Activated CD4-positive, alpha-beta T cell treated with anti-CD3 and anti-CD28 coated beads for 36 hours (primary cell): ENCODE measurements at regions of chr5 and their contacts with region 1.

Region 1: GRCh38 chr5:132490486-132491367 is at the start of gene IRF1:
- DNase-seq: peak; percentile 99
- ATAC-seq: peak; percentile 67
- H3K4me3 Mint-ChIP-seq: peak within 1 kb of the TSS; percentile 96
- H3K27ac Mint-ChIP-seq: peak within 1 kb of the TSS; percentile 97
- H3K4me1 Mint-ChIP-seq: peaks cover 69% of the 10 kb centered on the region
- H3K27me3 Mint-ChIP-seq: no peaks in the 10 kb centered on the region
- total RNA-seq, gene IRF1: 121 to 130 TPM

Region 2: DNA sequence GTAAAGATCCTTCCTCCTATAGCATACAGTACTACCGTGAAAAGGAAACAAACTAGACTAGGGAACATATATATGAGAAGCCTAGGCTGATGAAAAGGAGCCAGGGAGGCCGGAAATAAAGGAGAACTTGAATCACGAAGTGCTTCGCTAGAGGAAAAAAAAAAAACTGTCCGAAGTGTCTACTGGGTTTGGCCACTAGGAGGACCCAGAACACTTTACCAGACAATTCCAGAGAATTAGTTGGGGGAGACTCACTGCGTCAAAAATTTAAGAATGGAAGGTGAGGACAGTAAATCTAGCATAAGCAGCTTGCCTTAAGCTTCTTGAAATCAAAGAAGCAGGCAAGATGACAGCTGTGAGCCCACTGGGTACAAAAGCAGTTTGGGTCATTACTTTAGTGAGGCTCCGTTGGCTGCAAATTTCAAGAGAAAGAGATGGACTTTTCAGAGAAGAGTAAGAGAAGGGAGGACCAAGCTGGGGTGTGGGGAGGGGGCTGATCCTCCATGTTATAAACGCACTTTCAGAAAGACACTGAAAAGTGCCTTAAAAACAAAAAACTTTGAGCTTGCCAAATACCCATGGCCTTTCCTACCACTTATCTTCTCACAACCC is 310.5 kb before region 1 on chr5:
- CTCF ChIA-PET with region 1: no interaction called
- POLR2A ChIA-PET with region 1: no interaction called
- intact Hi-C with region 1: no loop called
- DNase-seq: peak; percentile 19
- ATAC-seq: peak; percentile 38
- H3K4me3 Mint-ChIP-seq: no peak overlapping the region
- H3K27ac Mint-ChIP-seq: peak overlapping the region; percentile 73
- H3K4me1 Mint-ChIP-seq: peaks cover 36% of the 10 kb centered on the region
- H3K27me3 Mint-ChIP-seq: no peaks in the 10 kb centered on the region

Region 3: DNA sequence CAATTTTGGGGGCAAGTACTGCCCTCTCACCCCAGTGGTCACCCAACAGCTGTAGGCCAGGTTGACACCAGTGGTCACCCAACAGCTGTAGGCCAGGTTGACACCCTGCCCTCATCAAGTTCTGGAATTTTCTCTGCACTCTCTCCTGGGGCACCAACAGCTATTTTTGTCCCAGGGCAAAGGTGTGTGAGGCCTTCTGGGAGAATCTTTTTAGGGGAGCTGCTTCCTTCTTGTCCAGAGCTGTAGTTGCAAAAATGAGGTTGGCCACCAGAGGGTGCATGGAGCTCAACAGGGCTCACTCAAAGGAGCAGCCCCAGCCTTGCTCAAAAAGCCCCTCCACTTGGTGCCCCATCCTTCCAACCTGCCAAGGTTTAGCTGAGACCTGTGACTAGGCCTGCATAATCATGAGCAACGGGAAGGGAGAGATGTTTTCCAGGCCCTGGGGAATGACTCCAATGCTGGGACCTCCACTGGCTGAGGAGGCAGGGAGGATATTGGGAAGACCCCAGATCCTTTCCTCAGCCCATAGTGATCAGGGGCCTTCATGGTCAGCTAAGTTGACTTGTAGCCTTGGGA is 252.5 kb before region 1 on chr5:
- CTCF ChIA-PET with region 1: no interaction called
- POLR2A ChIA-PET with region 1: no interaction called
- intact Hi-C with region 1: no loop called
- DNase-seq: peak; percentile 89
- ATAC-seq: peak; percentile 95
- H3K4me3 Mint-ChIP-seq: no peak overlapping the region
- H3K27ac Mint-ChIP-seq: no peak overlapping the region
- H3K4me1 Mint-ChIP-seq: no peaks in the 10 kb centered on the region
- H3K27me3 Mint-ChIP-seq: peaks cover 6% of the 10 kb centered on the region

Region 4: GRCh38 chr5:132456296-132457001 is 34.3 kb before region 1 on chr5:
- CTCF ChIA-PET with region 1: no interaction called
- POLR2A ChIA-PET with region 1: interaction called, 22 read pairs
- intact Hi-C with region 1: loop called (anchors 2 to 5 kb)
- DNase-seq: peak; percentile 79
- ATAC-seq: peak; percentile 68
- H3K4me3 Mint-ChIP-seq: peak overlapping the region; percentile 49
- H3K27ac Mint-ChIP-seq: peak overlapping the region; percentile 96
- H3K4me1 Mint-ChIP-seq: peaks cover 90% of the 10 kb centered on the region
- H3K27me3 Mint-ChIP-seq: no peaks in the 10 kb centered on the region

Region 5: DNA sequence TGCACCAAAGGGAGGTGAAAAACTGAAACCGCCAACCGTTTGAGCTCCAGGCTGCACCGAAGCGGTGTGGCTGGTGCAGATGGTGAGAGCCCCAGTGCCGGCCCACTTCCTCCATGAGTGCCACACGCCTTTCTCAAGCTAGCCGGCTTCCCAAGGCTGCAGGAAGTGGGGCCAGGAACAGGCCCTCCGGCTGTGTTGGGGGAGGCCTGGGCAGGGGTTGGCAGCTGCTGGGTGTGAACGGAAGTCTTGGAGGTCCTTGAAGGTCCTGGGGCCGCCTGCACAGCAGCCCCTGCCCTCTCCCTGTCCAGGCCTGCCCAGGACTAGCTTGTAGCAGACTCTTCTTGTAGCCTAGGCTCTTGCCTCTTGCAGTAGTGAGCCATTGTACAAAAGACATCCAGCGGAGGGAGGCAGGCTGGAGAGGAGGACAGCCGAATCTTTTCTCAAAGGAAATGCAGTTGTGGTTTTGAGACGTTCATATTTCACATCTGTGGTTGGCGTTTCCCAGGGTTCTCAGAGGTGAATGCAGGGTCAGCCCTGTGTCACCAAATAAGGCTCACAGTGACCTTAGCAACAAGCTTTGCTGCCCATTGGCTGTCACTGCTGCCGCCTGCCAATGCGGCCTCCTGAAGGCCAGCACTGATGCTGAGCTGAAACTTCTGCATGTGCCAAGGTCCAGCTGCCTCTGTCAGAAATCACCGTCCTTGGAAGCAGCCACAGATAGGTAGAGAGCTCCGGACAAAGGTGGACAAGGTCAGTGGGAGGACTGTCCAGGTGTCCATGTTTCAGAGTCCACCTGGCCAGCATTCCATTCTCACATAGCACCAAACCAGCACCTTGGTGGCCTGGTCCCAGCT is 24.1 kb before region 1 on chr5:
- CTCF ChIA-PET with region 1: interaction called, 16 read pairs
- POLR2A ChIA-PET with region 1: interaction called, 32 read pairs
- intact Hi-C with region 1: loop called in 1 of 2 experiments (anchors 2 kb)
- DNase-seq: peak; percentile 78
- ATAC-seq: peak; percentile 61
- H3K4me3 Mint-ChIP-seq: peak overlapping the region; percentile 51
- H3K27ac Mint-ChIP-seq: peak overlapping the region; percentile 51
- H3K4me1 Mint-ChIP-seq: peaks cover 88% of the 10 kb centered on the region
- H3K27me3 Mint-ChIP-seq: no peaks in the 10 kb centered on the region

Region 6: GRCh38 chr5:132473019-132473531 is 17.7 kb before region 1 on chr5:
- CTCF ChIA-PET with region 1: interaction called, 7 read pairs
- POLR2A ChIA-PET with region 1: interaction called, 116 read pairs
- intact Hi-C with region 1: no loop called
- DNase-seq: peak; percentile 83
- ATAC-seq: peak; percentile 94
- H3K4me3 Mint-ChIP-seq: no peak overlapping the region
- H3K27ac Mint-ChIP-seq: peak overlapping the region; percentile 93
- H3K4me1 Mint-ChIP-seq: peaks cover 59% of the 10 kb centered on the region
- H3K27me3 Mint-ChIP-seq: no peaks in the 10 kb centered on the region

Region 7: GRCh38 chr5:132479111-132479951 is 11.4 kb before region 1 on chr5:
- CTCF ChIA-PET with region 1: interaction called, 25 read pairs
- POLR2A ChIA-PET with region 1: interaction called, 116 read pairs
- intact Hi-C with region 1: no loop called
- DNase-seq: no peak
- ATAC-seq: peak; percentile 31
- H3K4me3 Mint-ChIP-seq: no peak overlapping the region
- H3K27ac Mint-ChIP-seq: peak overlapping the region; percentile 65
- H3K4me1 Mint-ChIP-seq: peaks cover 53% of the 10 kb centered on the region
- H3K27me3 Mint-ChIP-seq: no peaks in the 10 kb centered on the region

Region 8: DNA sequence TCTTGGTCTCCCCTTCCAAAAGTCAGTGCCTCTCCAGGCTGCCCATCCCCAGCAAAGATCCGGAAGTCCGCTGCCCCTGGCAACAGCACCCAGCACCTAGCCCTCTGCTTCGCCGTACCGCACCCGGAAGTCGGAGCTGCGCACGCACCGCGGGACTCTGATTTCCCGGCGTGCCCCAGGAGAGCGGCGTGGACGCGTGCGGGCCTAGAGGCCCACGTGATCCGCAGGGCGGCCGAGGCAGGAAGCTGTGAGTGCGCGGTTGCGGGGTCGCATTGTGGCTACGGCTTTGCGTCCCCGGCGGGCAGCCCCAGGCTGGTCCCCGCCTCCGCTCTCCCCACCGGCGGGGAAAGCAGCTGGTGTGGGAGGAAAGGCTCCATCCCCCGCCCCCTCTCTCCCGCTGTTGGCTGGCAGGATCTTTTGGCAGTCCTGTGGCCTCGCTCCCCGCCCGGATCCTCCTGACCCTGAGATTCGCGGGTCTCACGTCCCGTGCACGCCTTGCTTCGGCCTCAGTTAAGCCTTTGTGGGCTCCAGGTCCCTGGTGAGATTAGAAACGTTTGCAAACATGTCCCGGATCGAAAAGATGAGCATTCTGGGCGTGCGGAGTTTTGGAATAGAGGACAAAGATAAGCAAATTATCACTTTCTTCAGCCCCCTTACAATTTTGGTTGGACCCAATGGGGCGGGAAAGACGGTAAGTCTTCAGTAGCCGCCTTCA is 66.2 kb after region 1 on chr5 and contains the start of gene RAD50:
- CTCF ChIA-PET with region 1: no interaction called
- POLR2A ChIA-PET with region 1: interaction called, 4 read pairs
- intact Hi-C with region 1: loop called in 1 of 2 experiments (anchors 2 kb)
- DNase-seq: peak; percentile 96
- ATAC-seq: peak; percentile 99
- H3K4me3 Mint-ChIP-seq: peak within 1 kb of the TSS; percentile 96
- H3K27ac Mint-ChIP-seq: peak within 1 kb of the TSS; percentile 98
- H3K4me1 Mint-ChIP-seq: peaks cover 21% of the 10 kb centered on the region
- H3K27me3 Mint-ChIP-seq: no peaks in the 10 kb centered on the region
- total RNA-seq, gene RAD50: 46.0 to 51.3 TPM